Left ventricle myocardium superior (tissue), 1 donor: ENCODE measurements at regions of chr20 and their contacts with region 1.

Region 1: GRCh38 chr20:41173161-41173721 is 35.9 kb downstream of the PLCG1 start:
- DNase-seq: peak; percentile 93
- ATAC-seq: peak; percentile 83

Region 2: DNA sequence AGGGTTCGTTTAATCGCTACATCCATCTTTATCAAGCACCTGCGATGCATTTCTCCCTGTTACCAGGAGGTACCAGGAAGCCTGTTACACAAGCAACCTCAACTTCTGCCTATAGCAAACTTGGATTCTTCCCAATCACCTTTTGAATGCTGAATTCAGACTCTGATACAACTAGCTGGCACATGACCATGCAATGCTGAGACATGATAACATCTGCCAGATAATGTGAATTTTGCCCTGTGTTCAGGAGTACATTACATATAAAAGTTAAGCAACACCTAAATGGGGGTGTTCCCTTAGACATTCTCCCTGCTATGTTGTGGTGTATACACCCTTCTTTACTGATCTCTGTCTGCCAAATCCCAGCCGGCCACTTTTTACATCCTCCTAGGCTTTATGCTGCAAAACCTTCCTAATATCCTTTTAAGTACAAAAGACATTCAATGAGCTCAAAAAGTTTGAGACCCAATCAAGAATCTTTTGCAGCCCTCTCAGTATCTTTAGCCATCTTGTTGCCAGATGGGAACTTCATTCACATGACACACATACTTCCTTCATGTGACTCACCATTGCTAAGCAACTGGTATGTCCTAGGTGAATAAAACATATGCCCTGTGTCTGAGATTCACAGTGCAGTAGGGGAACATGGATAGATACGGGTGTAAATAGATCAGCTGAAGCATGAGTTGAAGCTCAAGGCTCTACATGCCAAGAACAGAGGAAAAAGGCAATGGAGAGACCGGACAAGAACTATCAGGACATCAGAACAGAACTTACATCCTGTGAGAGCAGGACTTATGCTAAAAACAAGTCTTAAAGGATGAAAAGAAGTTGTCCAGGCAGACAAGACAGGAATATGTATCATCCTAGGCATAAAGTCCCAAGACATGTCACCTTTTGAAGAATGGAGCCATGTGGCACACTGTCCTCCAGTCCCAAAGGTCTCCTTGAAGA is 60.0 kb after region 1 on chr20:
- intact Hi-C with region 1: loop called (anchors 5 kb)
- DNase-seq: no peak
- ATAC-seq: peak; percentile 39

Region 3: GRCh38 chr20:41339507-41340326 is 166.5 kb after region 1 on chr20:
- intact Hi-C with region 1: loop called (anchors 5 kb)
- DNase-seq: peak; percentile 90
- ATAC-seq: peak; percentile 79

Region 4: GRCh38 chr20:41411391-41411847 is 238.2 kb after region 1 on chr20:
- intact Hi-C with region 1: loop called (anchors 10 kb)
- DNase-seq: no peak
- ATAC-seq: peak; percentile 84